Activated B cell treated with CpG ODN at 0.5 μM for 24 hours (primary cell): ENCODE measurements at regions of chr3 and their contacts with region 1.

Region 1: GRCh38 chr3:4350789-4351163 is 47.6 kb downstream of the SETMAR start:
- DNase-seq: no peak
- ATAC-seq: peak; percentile 88
- H3K4me3 Mint-ChIP-seq: peak overlapping the region; percentile 44
- H3K27ac Mint-ChIP-seq: peak overlapping the region; percentile 8
- H3K4me1 Mint-ChIP-seq: peaks cover 9% of the 10 kb centered on the region
- H3K27me3 Mint-ChIP-seq: no peaks in the 10 kb centered on the region
- CTCF ChIP-seq: peak; percentile 26

Region 2: GRCh38 chr3:4512895-4513616 is 162.3 kb after region 1 on chr3:
- CTCF ChIA-PET with region 1: interaction called, 4 read pairs
- POLR2A ChIA-PET with region 1: no interaction called
- intact Hi-C with region 1: loop called (anchors 5 kb)
- DNase-seq: no peak
- ATAC-seq: peak; percentile 13
- H3K4me3 Mint-ChIP-seq: no peak overlapping the region
- H3K27ac Mint-ChIP-seq: peak overlapping the region; percentile 67
- H3K4me1 Mint-ChIP-seq: peaks cover 96% of the 10 kb centered on the region
- H3K27me3 Mint-ChIP-seq: no peaks in the 10 kb centered on the region
- CTCF ChIP-seq: no peak